K562 (cell line): ENCODE measurements at regions of chr3 and their contacts with region 1.

Region 1: DNA sequence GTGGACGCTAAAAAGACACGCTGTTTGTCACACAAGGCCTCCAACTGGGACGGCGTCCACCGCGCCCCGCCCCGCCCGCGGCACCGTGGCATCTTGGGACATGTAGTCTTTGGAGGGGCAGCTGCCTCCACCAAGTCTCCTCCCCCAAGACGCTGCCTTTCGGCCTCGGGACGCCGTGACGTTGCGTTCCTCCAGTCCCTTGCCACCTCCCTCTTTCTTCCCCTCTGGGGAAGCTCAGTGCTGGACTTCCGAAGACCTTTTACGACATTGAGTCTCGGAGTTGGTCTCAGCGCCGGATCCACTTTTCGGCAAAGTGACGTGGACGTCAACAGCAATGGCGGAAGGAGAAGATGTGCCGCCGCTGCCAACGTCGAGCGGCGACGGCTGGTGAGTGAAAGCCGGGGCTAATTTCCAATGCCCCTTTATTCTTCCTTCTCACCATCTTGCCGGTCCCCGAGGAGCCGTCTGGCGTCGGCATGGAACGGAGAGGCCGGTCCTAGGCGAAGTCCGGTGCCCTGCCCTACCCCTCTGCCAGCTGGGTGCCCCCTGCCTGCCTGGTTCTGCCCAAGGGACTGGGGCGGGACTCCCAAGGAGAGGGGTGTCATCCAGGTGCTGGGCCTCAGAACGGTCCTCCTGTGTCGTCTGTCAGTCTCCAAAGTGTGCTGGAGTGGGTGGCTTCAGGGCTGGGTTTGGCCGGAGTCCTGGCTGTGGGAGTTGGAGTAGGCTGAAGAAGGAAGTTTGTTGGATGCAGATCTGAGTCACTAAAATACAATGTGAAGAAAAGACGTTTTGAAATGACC is at the start of gene TBC1D23:
- DNase-seq: peak; percentile 84 to 98 (median 88)
- ATAC-seq: peak; percentile 90
- H3K4me3 ChIP-seq: peak within 1 kb of the TSS; percentile 95
- H3K27ac ChIP-seq: peak within 1 kb of the TSS; percentile 98
- H3K4me1 ChIP-seq: peaks cover 6 to 11% of the 10 kb centered on the region in 2 experiments
- H3K27me3 ChIP-seq: no peaks in the 10 kb centered on the region
- CTCF ChIP-seq: no peak
- EP300 ChIP-seq: no peak
- POLR2A ChIP-seq: peak; percentile 80
- RAD21 ChIP-seq: no peak
- polyA plus RNA-seq, gene TBC1D23: 43.7 to 49.3 TPM

Region 2: GRCh38 chr3:100289339-100289738 is 28.5 kb after region 1 on chr3:
- CTCF ChIA-PET with region 1: no interaction called
- POLR2A ChIA-PET with region 1: interaction called, 3 read pairs
- in situ Hi-C with region 1: no loop called
- intact Hi-C with region 1: loop called (anchors 2 kb)
- DNase-seq: peak; percentile 35 to 96 (median 68)
- ATAC-seq: peak; percentile 97
- H3K4me3 ChIP-seq: no peak overlapping the region
- H3K27ac ChIP-seq: peak overlapping the region; percentile 67
- H3K4me1 ChIP-seq: peaks cover 4 to 13% of the 10 kb centered on the region in 2 experiments; a peak in 4 of 5 replicates
- H3K27me3 ChIP-seq: no peaks in the 10 kb centered on the region
- CTCF ChIP-seq: no peak
- EP300 ChIP-seq: peak; percentile 81
- POLR2A ChIP-seq: no peak
- RAD21 ChIP-seq: peak in 1 of 2 experiments; percentile 13; a peak in 1 of 4 replicates